Naive thymus-derived CD4-positive, alpha-beta T cell (primary cell): ENCODE measurements at regions of chr5 and their contacts with region 1.

Region 1: GRCh38 chr5:119070828-119071572 is at the start of gene DMXL1:
- DNase-seq: peak; percentile 94 to 99 (median 98)
- ATAC-seq: peak; percentile 92
- H3K4me3 ChIP-seq: peak within 1 kb of the TSS; percentile 63
- H3K4me3 Mint-ChIP-seq: peak within 1 kb of the TSS; percentile 90 to 100 (median 98)
- H3K27ac ChIP-seq: peak within 1 kb of the TSS; percentile 93
- H3K27ac Mint-ChIP-seq: peak within 1 kb of the TSS; percentile 96 to 100 (median 99)
- H3K4me1 ChIP-seq: peaks cover 22 to 25% of the 10 kb centered on the region in 2 donors
- H3K4me1 Mint-ChIP-seq: peaks cover 24 to 44% (median 38%) of the 10 kb centered on the region in 7 donors
- H3K27me3 ChIP-seq: no peaks in the 10 kb centered on the region
- H3K27me3 Mint-ChIP-seq: peaks cover 0 to 2% (median 0%) of the 10 kb centered on the region in 5 donors
- total RNA-seq, gene DMXL1: 30.5 to 40.8 (median 32.4) TPM

Region 2: GRCh38 chr5:119031905-119032304 is 39.1 kb before region 1 on chr5:
- CTCF ChIA-PET with region 1: no interaction called
- POLR2A ChIA-PET with region 1: interaction called, 3 read pairs
- intact Hi-C with region 1: loop called (anchors 1 kb)
- DNase-seq: no peak
- ATAC-seq: no peak
- H3K4me3 ChIP-seq: no peak overlapping the region
- H3K4me3 Mint-ChIP-seq: peak overlapping the region in 8 of 10 donors; percentile 1 to 78 (median 44)
- H3K27ac ChIP-seq: peak overlapping the region; percentile 49
- H3K27ac Mint-ChIP-seq: peak overlapping the region; percentile 45 to 92 (median 84)
- H3K4me1 ChIP-seq: peaks cover 0 to 18% of the 10 kb centered on the region in 2 donors
- H3K4me1 Mint-ChIP-seq: peaks cover 0 to 24% (median 22%) of the 10 kb centered on the region in 7 donors
- H3K27me3 ChIP-seq: no peaks in the 10 kb centered on the region
- H3K27me3 Mint-ChIP-seq: no peaks in the 10 kb centered on the region

Region 3: GRCh38 chr5:119302916-119303897 is 232.2 kb after region 1 on chr5:
- CTCF ChIA-PET with region 1: no interaction called
- POLR2A ChIA-PET with region 1: interaction called, 7 read pairs
- intact Hi-C with region 1: loop called (anchors 2 kb)
- DNase-seq: peak in 3 of 9 donors; percentile 36 to 66 (median 51)
- ATAC-seq: peak; percentile 78
- H3K4me3 ChIP-seq: peak overlapping the region; percentile 24
- H3K4me3 Mint-ChIP-seq: peak overlapping the region; percentile 63 to 93 (median 76)
- H3K27ac ChIP-seq: peak overlapping the region; percentile 74
- H3K27ac Mint-ChIP-seq: peak overlapping the region; percentile 85 to 100 (median 98)
- H3K4me1 ChIP-seq: peaks cover 81 to 82% of the 10 kb centered on the region in 2 donors
- H3K4me1 Mint-ChIP-seq: peaks cover 57 to 97% (median 94%) of the 10 kb centered on the region in 7 donors
- H3K27me3 ChIP-seq: no peaks in the 10 kb centered on the region
- H3K27me3 Mint-ChIP-seq: no peaks in the 10 kb centered on the region

Region 4: GRCh38 chr5:119355685-119356611 is 284.9 kb after region 1 on chr5 and contains the start of gene TNFAIP8:
- CTCF ChIA-PET with region 1: interaction called, 4 read pairs
- POLR2A ChIA-PET with region 1: no interaction called
- intact Hi-C with region 1: loop called in 1 of 2 experiments (anchors 5 kb)
- DNase-seq: peak in 2 of 9 donors; percentile 69 to 85
- ATAC-seq: peak; percentile 61
- H3K4me3 ChIP-seq: peak within 1 kb of the TSS; percentile 53
- H3K4me3 Mint-ChIP-seq: peak within 1 kb of the TSS; percentile 81 to 98 (median 90)
- H3K27ac ChIP-seq: peak within 1 kb of the TSS; percentile 55
- H3K27ac Mint-ChIP-seq: peak within 1 kb of the TSS; percentile 86 to 97 (median 91)
- H3K4me1 ChIP-seq: peaks cover 78 to 88% of the 10 kb centered on the region in 2 donors
- H3K4me1 Mint-ChIP-seq: peaks cover 66 to 100% (median 97%) of the 10 kb centered on the region in 7 donors
- H3K27me3 ChIP-seq: no peaks in the 10 kb centered on the region
- H3K27me3 Mint-ChIP-seq: no peaks in the 10 kb centered on the region
- total RNA-seq, gene TNFAIP8: 102 to 162 (median 130) TPM

Region 5: GRCh38 chr5:119397518-119398380 is 326.7 kb after region 1 on chr5:
- CTCF ChIA-PET with region 1: no interaction called
- POLR2A ChIA-PET with region 1: no interaction called
- intact Hi-C with region 1: loop called in 1 of 2 experiments (anchors 5 kb)
- DNase-seq: no peak
- ATAC-seq: peak; percentile 62
- H3K4me3 ChIP-seq: no peak overlapping the region
- H3K4me3 Mint-ChIP-seq: peak overlapping the region in 3 of 10 donors; percentile 1 to 37 (median 1)
- H3K27ac ChIP-seq: peak overlapping the region; percentile 25
- H3K27ac Mint-ChIP-seq: peak overlapping the region in 8 of 9 donors; percentile 8 to 82 (median 54)
- H3K4me1 ChIP-seq: no peaks in the 10 kb centered on the region
- H3K4me1 Mint-ChIP-seq: peaks cover 22 to 56% (median 53%) of the 10 kb centered on the region in 7 donors
- H3K27me3 ChIP-seq: no peaks in the 10 kb centered on the region
- H3K27me3 Mint-ChIP-seq: no peaks in the 10 kb centered on the region

Region 6: GRCh38 chr5:119435436-119436132 is 364.6 kb after region 1 on chr5:
- CTCF ChIA-PET with region 1: interaction called, 3 read pairs
- POLR2A ChIA-PET with region 1: interaction called, 4 read pairs
- intact Hi-C with region 1: loop called in 1 of 2 experiments (anchors 1 kb)
- DNase-seq: peak; percentile 49 to 75 (median 64)
- ATAC-seq: peak; percentile 89
- H3K4me3 ChIP-seq: no peak overlapping the region
- H3K4me3 Mint-ChIP-seq: peak overlapping the region in 2 of 10 donors; percentile 9 to 32
- H3K27ac ChIP-seq: no peak overlapping the region
- H3K27ac Mint-ChIP-seq: no peak overlapping the region
- H3K4me1 ChIP-seq: no peaks in the 10 kb centered on the region
- H3K4me1 Mint-ChIP-seq: peaks cover 0 to 25% (median 16%) of the 10 kb centered on the region in 7 donors
- H3K27me3 ChIP-seq: no peaks in the 10 kb centered on the region
- H3K27me3 Mint-ChIP-seq: peaks cover 7 to 30% (median 8%) of the 10 kb centered on the region in 5 donors

Region 7: DNA sequence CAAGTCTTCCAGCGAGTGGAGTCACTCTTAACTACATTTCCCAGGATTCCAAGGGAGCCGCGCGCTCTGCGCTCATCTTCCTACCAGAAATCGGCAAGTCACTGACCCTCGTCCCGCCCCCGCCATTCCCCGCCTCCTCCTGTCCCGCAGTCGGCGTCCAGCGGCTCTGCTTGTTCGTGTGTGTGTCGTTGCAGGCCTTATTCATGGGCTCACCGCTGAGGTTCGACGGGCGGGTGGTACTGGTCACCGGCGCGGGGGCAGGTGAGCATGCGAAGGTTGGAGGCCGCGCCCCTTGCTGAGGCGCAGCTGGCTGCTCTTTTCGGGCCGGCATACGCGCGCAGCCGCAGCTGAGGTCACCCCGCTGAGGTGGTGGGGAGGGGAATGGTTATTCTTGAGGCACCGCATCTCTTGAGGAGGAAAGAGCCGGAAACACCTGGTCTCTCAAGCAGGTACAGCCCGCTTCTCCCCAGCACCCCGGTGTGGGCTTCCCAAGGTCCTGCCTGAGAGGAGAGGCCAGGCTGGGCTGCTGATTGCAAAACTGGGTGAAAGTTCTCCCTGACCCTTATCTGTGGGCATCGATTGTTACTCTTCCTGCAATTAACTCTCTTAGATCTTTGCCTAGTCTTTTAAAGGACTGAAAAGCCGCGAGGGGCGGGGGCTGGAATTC is 381.5 kb after region 1 on chr5 and contains the start of gene HSD17B4:
- CTCF ChIA-PET with region 1: no interaction called
- POLR2A ChIA-PET with region 1: interaction called, 3 read pairs
- intact Hi-C with region 1: loop called (anchors 1 kb)
- DNase-seq: peak; percentile 61 to 89 (median 85)
- ATAC-seq: peak; percentile 94
- H3K4me3 ChIP-seq: peak within 1 kb of the TSS; percentile 86
- H3K4me3 Mint-ChIP-seq: peak within 1 kb of the TSS; percentile 86 to 98 (median 92)
- H3K27ac ChIP-seq: peak within 1 kb of the TSS; percentile 84
- H3K27ac Mint-ChIP-seq: peak within 1 kb of the TSS; percentile 80 to 94 (median 86)
- H3K4me1 ChIP-seq: peaks cover 5 to 9% of the 10 kb centered on the region in 2 donors
- H3K4me1 Mint-ChIP-seq: peaks cover 11 to 24% (median 20%) of the 10 kb centered on the region in 7 donors
- H3K27me3 ChIP-seq: no peaks in the 10 kb centered on the region
- H3K27me3 Mint-ChIP-seq: peaks cover 0 to 17% (median 0%) of the 10 kb centered on the region in 5 donors
- total RNA-seq, gene HSD17B4: 22.5 to 77.2 (median 71.0) TPM